ENCODE measurements at regions of chr4 and their contacts with region 1.

Region 1: DNA sequence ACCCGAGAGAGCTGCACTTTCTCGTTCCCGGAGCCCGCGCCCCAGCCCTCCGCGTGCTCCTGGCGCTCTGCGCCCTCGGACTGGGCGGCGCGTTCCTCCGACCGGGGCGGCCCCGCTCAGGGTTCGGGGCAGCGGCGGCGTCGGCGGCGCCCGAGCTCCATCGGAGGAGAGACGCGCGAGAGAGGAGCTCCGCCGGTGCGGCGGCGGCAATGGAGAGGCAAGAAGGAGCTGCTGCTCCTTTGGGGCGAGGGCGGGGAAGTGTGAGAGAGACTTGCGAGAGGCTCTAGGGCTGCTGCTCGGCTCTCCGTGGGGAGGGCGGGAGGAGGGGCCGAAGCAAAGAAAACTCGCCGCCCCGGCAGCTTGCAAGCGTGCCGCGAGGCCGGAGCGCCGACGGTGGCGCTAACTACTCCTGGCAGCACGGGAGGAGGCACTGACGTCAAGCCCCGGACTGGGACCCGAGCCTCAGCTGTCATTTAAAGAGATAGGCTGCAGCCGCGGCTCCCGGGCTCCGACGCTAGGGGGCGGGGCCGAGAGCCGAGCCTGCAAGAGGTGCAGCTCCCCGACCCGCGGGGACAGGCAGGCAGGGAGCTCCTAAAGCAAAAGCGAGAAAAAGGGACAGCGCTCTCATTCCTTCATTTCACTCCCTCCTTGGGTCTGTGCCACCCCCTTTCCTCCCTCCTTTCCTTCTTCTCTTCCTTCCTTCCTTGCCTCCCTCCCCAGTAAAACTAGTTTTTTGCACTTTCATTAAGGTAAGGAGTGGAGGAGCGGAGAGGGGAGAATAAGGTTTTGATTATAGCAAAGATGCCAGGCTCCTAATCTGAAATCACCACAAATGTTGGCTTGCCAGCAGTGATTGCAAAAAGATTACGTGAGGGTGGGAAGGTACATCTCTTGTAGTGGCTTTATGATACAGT is at the start of gene KCTD8:
- DNase-seq: peak; percentile 89 to 99 (median 96)

Region 2: GRCh38 chr4:43547561-43547960 is 901.2 kb before region 1 on chr4:
- intact Hi-C with region 1: no loop called
- DNase-seq: no peak

Region 3: DNA sequence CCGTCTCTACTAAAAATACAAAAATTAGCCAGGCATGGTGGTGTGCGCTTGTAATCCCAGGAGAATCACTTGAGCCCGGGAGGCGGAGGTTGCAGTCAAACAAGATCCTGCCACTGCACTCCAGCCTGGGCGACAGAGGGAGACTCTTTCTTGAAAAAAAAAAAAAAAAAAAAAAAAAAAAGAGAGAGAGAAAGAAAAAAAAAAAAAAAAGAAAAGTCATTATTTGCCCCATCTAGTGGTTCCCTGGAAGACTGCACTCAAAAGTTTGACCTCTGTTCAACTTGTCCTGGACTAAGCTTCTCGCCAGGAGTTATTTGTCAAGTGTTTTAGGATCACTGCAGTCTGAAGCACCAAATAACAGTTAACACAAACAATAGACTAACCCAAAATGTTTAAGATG is 45.1 kb after region 1 on chr4:
- intact Hi-C with region 1: loop called (anchors 5 kb)
- DNase-seq: no peak

Region 4: DNA sequence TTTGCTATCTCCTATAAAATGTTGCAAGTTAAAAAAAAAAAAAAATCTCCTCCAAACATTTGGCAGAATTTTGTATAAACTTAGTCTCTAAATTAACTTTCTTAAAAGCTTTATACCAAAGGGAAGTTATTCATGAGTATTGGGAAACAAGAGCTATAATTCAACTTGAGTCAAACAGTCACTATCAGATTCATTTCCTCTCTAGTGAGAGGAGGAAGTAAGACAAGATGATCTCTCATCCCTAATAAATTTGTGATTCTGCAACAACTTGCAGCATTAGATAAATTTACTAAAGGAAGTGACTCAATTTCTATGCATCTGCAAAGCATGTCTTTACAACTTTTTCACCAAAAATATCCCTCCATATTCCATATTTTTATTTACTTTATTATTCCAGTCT is 413.0 kb after region 1 on chr4:
- intact Hi-C with region 1: no loop called
- DNase-seq: no peak

Measured in posterior cingulate gyrus (tissue), 11 donors.